HCT116 (cell line): ENCODE measurements at regions of chr14 and their contacts with region 1.

Region 1: GRCh38 chr14:96100161-96101029 is 61.2 kb downstream of the C14orf132 start:
- DNase-seq: peak; percentile 73
- ATAC-seq: peak; percentile 79
- H3K4me3 ChIP-seq: no peak overlapping the region
- H3K27ac ChIP-seq: no peak overlapping the region
- H3K4me1 ChIP-seq: peaks cover 4 to 9% of the 10 kb centered on the region in 2 experiments; a peak in 1 of 4 replicates
- H3K27me3 ChIP-seq: no peaks in the 10 kb centered on the region
- CTCF ChIP-seq: peak; percentile 91 to 99 (median 98)
- POLR2A ChIP-seq: no peak
- RAD21 ChIP-seq: peak; percentile 99

Region 2: DNA sequence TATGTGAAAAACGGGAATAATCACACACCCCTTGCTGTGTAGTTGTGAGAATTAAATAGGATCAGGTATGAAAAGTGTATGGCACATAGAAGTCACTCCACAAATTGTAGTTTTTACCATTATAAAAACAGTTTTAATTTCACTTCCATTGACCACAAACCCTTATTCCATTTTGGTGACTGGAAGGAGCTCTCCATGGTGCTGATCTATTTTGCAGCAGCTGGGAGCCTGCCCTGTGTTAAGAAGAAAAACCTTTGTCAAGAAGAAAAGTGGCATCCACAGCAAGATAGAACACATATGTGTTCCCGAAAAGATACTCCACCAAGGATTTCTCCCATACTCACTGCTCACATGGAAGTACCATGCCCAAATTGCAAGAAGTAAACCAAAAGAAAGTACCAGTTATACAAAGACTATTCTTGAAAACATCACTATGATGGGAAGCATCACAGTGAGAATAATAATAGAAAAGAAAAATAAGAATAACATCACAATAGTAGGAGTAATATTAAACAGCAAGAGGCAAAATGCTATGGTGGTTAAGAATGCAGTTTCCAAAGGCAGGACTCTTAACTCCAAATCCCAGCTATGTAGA is 165.1 kb before region 1 on chr14:
- CTCF ChIA-PET with region 1: no interaction called
- POLR2A ChIA-PET with region 1: no interaction called
- RAD21 ChIA-PET with region 1: no interaction called
- intact Hi-C with region 1: no loop called
- DNase-seq: no peak
- ATAC-seq: no peak
- H3K4me3 ChIP-seq: no peak overlapping the region
- H3K27ac ChIP-seq: no peak overlapping the region
- H3K4me1 ChIP-seq: no peaks in the 10 kb centered on the region
- H3K27me3 ChIP-seq: peaks cover 16% of the 10 kb centered on the region
- CTCF ChIP-seq: no peak
- POLR2A ChIP-seq: no peak
- RAD21 ChIP-seq: no peak

Region 3: GRCh38 chr14:96051642-96052540 is 48.5 kb before region 1 on chr14:
- CTCF ChIA-PET with region 1: interaction called, 37 read pairs
- POLR2A ChIA-PET with region 1: interaction called, 3 read pairs
- RAD21 ChIA-PET with region 1: interaction called, 5 read pairs
- intact Hi-C with region 1: loop called (anchors 1 kb)
- DNase-seq: peak; percentile 12
- ATAC-seq: peak; percentile 85
- H3K4me3 ChIP-seq: no peak overlapping the region
- H3K27ac ChIP-seq: no peak overlapping the region
- H3K4me1 ChIP-seq: no peaks in the 10 kb centered on the region
- H3K27me3 ChIP-seq: no peaks in the 10 kb centered on the region
- CTCF ChIP-seq: peak; percentile 31 to 72 (median 70); a peak in 4 of 6 replicates
- POLR2A ChIP-seq: no peak
- RAD21 ChIP-seq: peak; percentile 50

Region 4: GRCh38 chr14:96275177-96276112 is 175.1 kb after region 1 on chr14:
- CTCF ChIA-PET with region 1: interaction called, 66 read pairs
- POLR2A ChIA-PET with region 1: no interaction called
- RAD21 ChIA-PET with region 1: interaction called, 5 to 11 read pairs
- intact Hi-C with region 1: loop called (anchors 1 kb)
- DNase-seq: peak; percentile 29
- ATAC-seq: peak; percentile 88
- H3K4me3 ChIP-seq: no peak overlapping the region
- H3K27ac ChIP-seq: no peak overlapping the region
- H3K4me1 ChIP-seq: no peaks in the 10 kb centered on the region
- H3K27me3 ChIP-seq: no peaks in the 10 kb centered on the region
- CTCF ChIP-seq: peak; percentile 92 to 95 (median 95)
- POLR2A ChIP-seq: no peak
- RAD21 ChIP-seq: peak; percentile 91

Region 5: DNA sequence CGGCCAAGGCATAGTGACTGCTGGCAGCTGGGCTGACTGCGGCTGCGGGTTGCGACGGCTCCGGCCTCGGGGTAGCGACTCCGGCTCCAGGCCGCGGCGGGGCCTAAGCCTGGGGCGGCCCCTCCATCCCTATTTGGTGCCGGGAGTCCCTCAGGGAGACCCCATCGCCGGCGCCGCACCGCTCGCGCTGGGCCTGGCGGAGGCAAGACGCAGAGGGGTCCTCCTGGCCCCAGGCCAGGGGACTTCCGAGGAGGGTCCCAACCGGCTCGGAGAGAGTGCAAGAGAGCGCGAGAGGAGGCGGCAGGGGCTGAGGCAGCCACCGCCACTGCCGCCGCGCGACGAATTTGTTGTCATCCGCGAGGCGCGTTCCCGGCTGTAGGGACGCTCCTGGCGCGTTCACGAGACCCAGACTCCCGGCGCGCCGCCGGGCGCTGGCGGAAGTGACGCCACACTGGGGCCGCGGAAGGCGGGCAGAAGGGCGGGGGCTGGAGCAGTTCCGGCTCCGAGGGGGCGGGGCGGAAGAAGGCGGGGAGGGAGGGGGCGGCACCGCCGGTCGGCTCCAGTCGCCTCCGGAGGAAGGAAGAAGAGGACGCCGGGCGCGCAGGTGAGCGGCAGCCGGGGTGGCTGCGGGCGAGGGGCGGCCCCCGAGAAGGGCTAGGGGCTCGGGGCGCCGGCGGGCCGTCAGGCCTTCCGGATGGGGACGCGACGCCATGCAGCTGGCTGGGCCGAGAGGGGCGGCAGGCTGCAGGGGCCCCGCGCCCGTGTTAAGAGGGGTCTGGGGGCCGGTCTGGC is 262.8 kb after region 1 on chr14 and contains the starts of genes ATG2B and GSKIP:
- CTCF ChIA-PET with region 1: no interaction called
- POLR2A ChIA-PET with region 1: no interaction called
- RAD21 ChIA-PET with region 1: no interaction called
- intact Hi-C with region 1: loop called (anchors 1 kb)
- DNase-seq: peak; percentile 83
- ATAC-seq: peak; percentile 82
- H3K4me3 ChIP-seq: peak within 1 kb of the TSS; percentile 85 to 92
- H3K27ac ChIP-seq: peak within 1 kb of the TSS; percentile 58; the same call in 1 of the 2 replicates
- H3K4me1 ChIP-seq: peaks cover 11 to 24% of the 10 kb centered on the region in 2 experiments; a peak in 2 of 4 replicates
- H3K27me3 ChIP-seq: no peaks in the 10 kb centered on the region
- CTCF ChIP-seq: no peak
- POLR2A ChIP-seq: peak; percentile 46
- RAD21 ChIP-seq: no peak
- total RNA-seq, gene ATG2B: 6.4 TPM
- total RNA-seq, gene GSKIP: 21.7 TPM

Region 6: DNA sequence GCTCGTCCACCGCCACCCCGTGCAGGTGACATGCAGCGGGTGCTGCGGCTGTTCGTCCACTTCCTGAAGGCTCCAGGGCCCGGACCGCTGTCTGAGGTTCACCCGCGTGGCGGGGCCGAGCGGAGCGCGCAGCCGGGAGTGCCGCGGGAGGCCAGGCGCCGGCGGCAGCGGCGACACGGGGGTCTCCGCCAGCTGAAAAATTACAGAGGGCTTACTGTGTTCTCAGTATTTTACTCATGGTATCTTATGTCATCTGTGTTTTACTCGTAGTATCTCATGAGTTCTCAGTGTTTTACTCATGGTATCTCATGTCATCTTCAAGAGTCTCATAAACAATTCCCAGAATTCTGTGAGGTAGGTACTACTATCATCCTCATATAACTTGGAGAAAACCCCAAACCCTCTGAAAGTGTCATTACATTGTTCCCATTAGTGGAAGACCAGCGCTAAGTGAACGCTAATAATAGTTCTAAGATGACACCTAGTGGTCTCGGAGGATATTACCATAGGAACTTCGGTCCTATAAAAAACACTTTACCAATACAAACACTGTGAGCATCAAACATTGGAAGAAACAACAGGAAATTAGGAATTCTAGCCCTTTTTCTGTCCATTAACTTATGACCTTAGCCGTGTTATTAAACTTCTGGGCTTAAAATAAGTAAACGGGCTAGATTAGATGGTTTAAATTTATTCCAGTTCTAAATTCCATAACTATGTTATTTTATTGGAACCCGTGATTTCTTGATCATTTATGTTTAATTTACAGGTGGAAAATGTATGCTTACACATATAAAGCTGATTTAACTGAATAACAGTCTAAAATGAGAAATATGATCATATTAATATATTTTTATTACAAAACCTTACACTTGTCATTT is 324.0 kb after region 1 on chr14:
- CTCF ChIA-PET with region 1: interaction called, 10 read pairs
- POLR2A ChIA-PET with region 1: no interaction called
- RAD21 ChIA-PET with region 1: no interaction called
- intact Hi-C with region 1: loop called (anchors 1 kb)
- DNase-seq: peak; percentile 57
- ATAC-seq: peak; percentile 89
- H3K4me3 ChIP-seq: no peak overlapping the region
- H3K27ac ChIP-seq: no peak overlapping the region
- H3K4me1 ChIP-seq: no peaks in the 10 kb centered on the region
- H3K27me3 ChIP-seq: no peaks in the 10 kb centered on the region
- CTCF ChIP-seq: peak; percentile 46 to 88 (median 86); a peak in 5 of 6 replicates
- POLR2A ChIP-seq: no peak
- RAD21 ChIP-seq: peak; percentile 91